Activated CD4-positive, alpha-beta memory T cell treated with anti-CD3 and anti-CD28 coated beads for 36 hours (primary cell): ENCODE measurements at regions of chr16 and their contacts with region 1.

Region 1: DNA sequence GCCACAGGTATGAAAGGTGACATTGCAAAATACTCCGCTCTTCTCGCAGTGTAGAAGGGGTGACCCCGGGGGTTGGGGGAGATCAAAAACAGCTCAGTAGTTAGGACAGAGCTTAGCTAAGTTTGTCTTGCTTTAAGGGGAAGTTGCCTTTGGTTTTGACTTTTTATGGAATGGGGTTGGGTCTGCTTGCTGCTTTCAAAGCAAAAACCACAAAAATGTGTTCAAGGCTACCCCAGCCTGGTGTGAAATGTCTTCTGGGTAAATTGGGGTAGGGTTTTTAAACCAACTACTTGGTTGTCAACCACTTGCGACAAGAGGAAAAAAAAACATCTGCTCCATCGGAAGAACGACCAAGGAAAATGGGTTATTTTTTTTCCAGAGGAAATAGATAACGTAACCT is 6.2 kb downstream of the FUS start:
- DNase-seq: no peak
- H3K4me3 Mint-ChIP-seq: no peak overlapping the region
- H3K27ac Mint-ChIP-seq: peak overlapping the region; percentile 58
- H3K4me1 Mint-ChIP-seq: peaks cover 86% of the 10 kb centered on the region
- H3K27me3 Mint-ChIP-seq: no peaks in the 10 kb centered on the region

Region 2: DNA sequence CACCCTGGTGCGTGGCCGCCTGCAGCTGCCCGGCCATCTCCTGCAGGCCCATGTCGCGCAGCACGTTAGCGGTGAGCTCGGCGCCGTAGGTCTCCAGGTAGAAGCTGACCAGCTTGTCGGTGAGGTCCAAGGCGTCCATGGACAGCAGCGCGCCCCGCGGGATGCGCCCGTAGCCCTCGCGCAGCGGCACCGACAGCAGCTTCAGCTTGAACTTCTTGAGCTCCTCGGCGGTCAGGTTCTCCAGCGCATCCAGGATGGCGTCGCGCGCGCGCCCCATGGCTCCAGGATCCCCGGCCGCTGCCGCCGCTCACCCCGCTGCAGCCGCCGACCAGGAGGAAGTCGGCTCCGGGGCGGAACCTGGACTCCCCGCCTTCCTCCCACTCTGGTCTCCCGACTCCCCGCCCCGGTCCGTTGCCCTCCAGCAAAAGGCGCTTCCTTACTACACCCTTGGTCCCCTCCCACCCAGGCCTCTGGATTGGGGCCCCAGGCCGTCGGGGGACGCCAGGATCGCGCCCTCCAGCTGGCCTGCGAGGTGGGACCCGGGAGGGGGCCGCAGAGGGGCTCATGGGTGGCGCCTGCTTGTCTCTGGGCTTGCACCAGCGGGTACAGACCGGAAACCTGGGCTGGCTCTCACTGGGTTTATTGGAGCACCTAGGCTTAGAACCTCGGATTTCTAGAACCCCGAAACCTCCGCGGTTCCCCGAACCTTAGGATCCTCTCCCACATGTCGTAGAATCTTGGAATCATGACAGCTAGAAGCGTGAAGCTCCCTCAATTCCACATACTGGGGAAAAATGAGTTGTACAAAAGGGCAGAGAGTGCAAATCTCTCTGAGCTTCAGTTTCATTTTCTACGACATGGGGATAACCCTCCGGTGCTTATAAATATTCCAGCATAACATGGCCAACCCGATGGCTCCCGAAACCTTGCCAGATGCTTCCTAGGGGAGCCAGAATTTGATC is 16.5 kb after region 1 on chr16 and contains the start of gene PYCARD:
- CTCF ChIA-PET with region 1: no interaction called
- POLR2A ChIA-PET with region 1: interaction called, 22 read pairs
- intact Hi-C with region 1: no loop called
- DNase-seq: peak; percentile 49
- H3K4me3 Mint-ChIP-seq: peak within 1 kb of the TSS; percentile 78
- H3K27ac Mint-ChIP-seq: peak within 1 kb of the TSS; percentile 69
- H3K4me1 Mint-ChIP-seq: peaks cover 54% of the 10 kb centered on the region
- H3K27me3 Mint-ChIP-seq: no peaks in the 10 kb centered on the region
- total RNA-seq, gene PYCARD: 13.6 to 14.6 TPM